HepG2 (cell line): ENCODE measurements at regions of chr6 and their contacts with region 1.

Region 1: DNA sequence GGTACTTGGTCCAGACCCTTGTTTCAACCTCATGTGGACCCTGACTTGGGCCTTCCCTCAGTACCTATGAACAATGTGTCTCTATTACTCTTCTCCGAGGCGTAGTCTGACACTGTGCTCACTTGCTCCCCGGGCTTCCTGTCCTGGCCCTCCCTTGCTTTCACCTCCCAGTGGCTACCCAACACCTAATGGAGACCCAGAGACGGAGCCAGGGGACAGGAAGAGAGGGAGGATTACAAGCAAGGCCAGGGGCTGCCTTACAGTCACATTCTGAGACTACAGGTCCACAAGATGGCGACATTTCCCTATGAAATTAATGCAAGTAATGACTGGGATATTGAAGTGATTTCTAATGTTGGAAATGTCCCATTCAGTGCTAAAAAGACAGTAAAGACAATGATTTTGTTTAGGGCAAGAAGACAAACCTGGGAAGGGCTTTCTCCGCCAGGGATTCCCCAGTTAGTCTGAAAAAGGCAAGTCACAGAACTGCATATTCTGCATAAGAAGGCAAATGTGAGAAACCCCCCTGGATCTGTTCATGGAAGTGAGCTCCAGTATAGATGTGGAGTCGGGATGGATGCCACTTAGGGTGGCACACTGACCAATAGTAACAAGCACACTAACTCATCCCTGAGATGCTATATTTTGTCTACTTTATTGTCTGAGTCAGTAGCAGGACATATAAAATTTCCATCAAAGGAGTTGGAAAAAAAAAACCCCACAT is 44.0 kb upstream of the ZBTB24 start:
- DNase-seq: peak; percentile 65
- ATAC-seq: peak; percentile 97
- H3K4me3 ChIP-seq: no peak overlapping the region; a peak in 1 of 6 replicates
- H3K27ac ChIP-seq: no peak overlapping the region
- H3K4me1 ChIP-seq: no peaks in the 10 kb centered on the region
- H3K27me3 ChIP-seq: no peaks in the 10 kb centered on the region
- CTCF ChIP-seq: peak; percentile 86
- EP300 ChIP-seq: no peak
- POLR2A ChIP-seq: no peak
- RAD21 ChIP-seq: peak; percentile 31; the same call in 1 of the 2 replicates

Region 2: GRCh38 chr6:109690737-109691621 is 163.9 kb after region 1 on chr6 and contains the starts of genes AK9 and FIG4:
- CTCF ChIA-PET with region 1: interaction called, 3 read pairs
- POLR2A ChIA-PET with region 1: no interaction called
- in situ Hi-C with region 1: loop called (anchors 5 kb)
- intact Hi-C with region 1: loop called (anchors 1 kb)
- DNase-seq: peak; percentile 89
- ATAC-seq: peak; percentile 99
- H3K4me3 ChIP-seq: peak within 1 kb of the TSS; percentile 80 to 90 (median 86)
- H3K27ac ChIP-seq: peak within 1 kb of the TSS; percentile 75
- H3K4me1 ChIP-seq: peaks cover 21% of the 10 kb centered on the region
- H3K27me3 ChIP-seq: no peaks in the 10 kb centered on the region
- CTCF ChIP-seq: peak; percentile 75
- EP300 ChIP-seq: no peak
- POLR2A ChIP-seq: peak; percentile 57 to 67
- RAD21 ChIP-seq: no peak; the same call in 1 of the 2 replicates
- total RNA-seq, gene AK9: 4.8 and 7.1 TPM in 2 replicates
- total RNA-seq, gene FIG4: 7.9 and 10.3 TPM in 2 replicates

Region 3: GRCh38 chr6:110053395-110054240 is 526.6 kb after region 1 on chr6:
- CTCF ChIA-PET with region 1: interaction called, 3 read pairs
- POLR2A ChIA-PET with region 1: no interaction called
- in situ Hi-C with region 1: loop called (anchors 5 kb)
- intact Hi-C with region 1: no loop called
- DNase-seq: peak; percentile 36
- ATAC-seq: peak; percentile 71
- H3K4me3 ChIP-seq: no peak overlapping the region
- H3K27ac ChIP-seq: no peak overlapping the region
- H3K4me1 ChIP-seq: peaks cover 10% of the 10 kb centered on the region; the same call in 1 of the 2 replicates
- H3K27me3 ChIP-seq: peaks cover 1 to 22% of the 10 kb centered on the region in 2 experiments; a peak in 3 of 5 replicates
- CTCF ChIP-seq: peak; percentile 72
- EP300 ChIP-seq: no peak
- POLR2A ChIP-seq: no peak
- RAD21 ChIP-seq: peak; percentile 37; the same call in 1 of the 2 replicates